PC-3 (cell line): ENCODE measurements at regions of chr10 and their contacts with region 1.

Region 1: GRCh38 chr10:61825617-61826016 is 75.9 kb upstream of the ARID5B start:
- DNase-seq: peak; percentile 99
- ATAC-seq: peak; percentile 95
- H3K4me3 ChIP-seq: no peak overlapping the region
- H3K27ac ChIP-seq: peak overlapping the region; percentile 42
- H3K4me1 ChIP-seq: peaks cover 23% of the 10 kb centered on the region
- H3K27me3 ChIP-seq: no peaks in the 10 kb centered on the region
- CTCF ChIP-seq: no peak

Region 2: GRCh38 chr10:61760943-61761824 is 64.4 kb before region 1 on chr10:
- CTCF ChIA-PET with region 1: no interaction called
- POLR2A ChIA-PET with region 1: no interaction called
- intact Hi-C with region 1: loop called (anchors 1 kb)
- DNase-seq: peak; percentile 99
- ATAC-seq: peak; percentile 66
- H3K4me3 ChIP-seq: peak overlapping the region; percentile 4; the same call in 1 of the 2 replicates
- H3K27ac ChIP-seq: peak overlapping the region; percentile 77
- H3K4me1 ChIP-seq: peaks cover 53% of the 10 kb centered on the region
- H3K27me3 ChIP-seq: no peaks in the 10 kb centered on the region
- CTCF ChIP-seq: no peak